A673 (cell line): ENCODE measurements at regions of chr22 and their contacts with region 1.

Region 1: DNA sequence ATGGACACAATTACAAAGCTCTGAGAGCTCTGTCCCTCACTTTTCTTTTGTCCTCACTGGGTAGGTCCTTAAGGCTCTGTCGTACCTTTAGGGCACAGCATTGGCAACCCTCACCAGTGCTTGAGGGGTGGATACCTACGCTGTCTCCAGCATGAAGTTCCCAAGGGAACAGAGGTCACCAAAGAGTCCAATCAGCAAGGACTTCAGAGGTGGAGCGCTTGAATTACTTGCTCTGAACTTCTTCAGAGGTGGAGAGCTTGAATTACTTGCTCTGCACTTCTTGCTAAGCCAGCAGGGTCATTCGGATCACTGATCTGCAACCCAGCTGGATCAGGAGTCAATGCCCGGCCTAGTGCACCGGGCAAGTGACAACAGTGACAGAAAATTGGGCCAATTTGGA is 35.1 kb downstream of the RRP7A start:
- DNase-seq: no peak
- H3K4me3 ChIP-seq: no peak overlapping the region
- H3K27ac ChIP-seq: no peak overlapping the region
- H3K4me1 ChIP-seq: no peaks in the 10 kb centered on the region
- H3K27me3 ChIP-seq: no peaks in the 10 kb centered on the region
- CTCF ChIP-seq: no peak

Region 2: GRCh38 chr22:41798736-41799135 is 685.8 kb before region 1 on chr22:
- CTCF ChIA-PET with region 1: no interaction called
- POLR2A ChIA-PET with region 1: interaction called, 11 read pairs
- intact Hi-C with region 1: no loop called
- DNase-seq: no peak
- H3K4me3 ChIP-seq: no peak overlapping the region
- H3K27ac ChIP-seq: no peak overlapping the region
- H3K4me1 ChIP-seq: peaks cover 17% of the 10 kb centered on the region
- H3K27me3 ChIP-seq: no peaks in the 10 kb centered on the region
- CTCF ChIP-seq: no peak